CD8-positive, alpha-beta T cell (primary cell): ENCODE measurements at regions of chr16 and their contacts with region 1.

Region 1: GRCh38 chr16:2715519-2715918 is 4.5 kb downstream of the PRSS27 start:
- DNase-seq: peak; percentile 70 to 90 (median 87)
- ATAC-seq: peak; percentile 99
- H3K4me3 ChIP-seq: peak overlapping the region; percentile 8 to 33
- H3K4me3 Mint-ChIP-seq: peak overlapping the region; percentile 5
- H3K27ac ChIP-seq: no peak overlapping the region
- H3K27ac Mint-ChIP-seq: no peak overlapping the region
- H3K4me1 ChIP-seq: peaks cover 5% of the 10 kb centered on the region
- H3K4me1 Mint-ChIP-seq: peaks cover 3% of the 10 kb centered on the region
- H3K27me3 ChIP-seq: no peaks in the 10 kb centered on the region
- H3K27me3 Mint-ChIP-seq: no peaks in the 10 kb centered on the region
- CTCF ChIP-seq: no peak

Region 2: DNA sequence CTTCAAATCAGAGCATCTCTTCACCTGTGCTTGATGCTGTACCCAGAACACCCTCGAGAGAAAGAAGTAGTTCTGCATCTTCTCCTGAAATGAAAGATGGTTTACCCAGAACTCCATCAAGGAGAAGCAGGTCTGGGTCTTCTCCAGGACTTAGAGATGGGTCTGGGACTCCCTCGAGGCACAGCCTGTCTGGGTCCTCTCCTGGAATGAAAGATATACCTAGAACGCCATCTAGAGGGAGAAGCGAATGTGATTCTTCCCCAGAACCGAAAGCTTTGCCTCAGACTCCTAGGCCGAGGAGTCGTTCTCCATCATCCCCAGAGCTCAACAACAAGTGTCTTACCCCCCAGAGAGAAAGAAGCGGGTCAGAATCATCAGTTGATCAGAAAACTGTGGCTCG is 49.2 kb after region 1 on chr16:
- CTCF ChIA-PET with region 1: no interaction called
- POLR2A ChIA-PET with region 1: no interaction called
- intact Hi-C with region 1: no loop called
- DNase-seq: no peak
- ATAC-seq: no peak
- H3K4me3 ChIP-seq: no peak overlapping the region
- H3K4me3 Mint-ChIP-seq: no peak overlapping the region
- H3K27ac ChIP-seq: no peak overlapping the region
- H3K27ac Mint-ChIP-seq: no peak overlapping the region
- H3K4me1 ChIP-seq: no peaks in the 10 kb centered on the region
- H3K4me1 Mint-ChIP-seq: peaks cover 17% of the 10 kb centered on the region
- H3K27me3 ChIP-seq: no peaks in the 10 kb centered on the region
- H3K27me3 Mint-ChIP-seq: no peaks in the 10 kb centered on the region
- CTCF ChIP-seq: no peak

Region 3: DNA sequence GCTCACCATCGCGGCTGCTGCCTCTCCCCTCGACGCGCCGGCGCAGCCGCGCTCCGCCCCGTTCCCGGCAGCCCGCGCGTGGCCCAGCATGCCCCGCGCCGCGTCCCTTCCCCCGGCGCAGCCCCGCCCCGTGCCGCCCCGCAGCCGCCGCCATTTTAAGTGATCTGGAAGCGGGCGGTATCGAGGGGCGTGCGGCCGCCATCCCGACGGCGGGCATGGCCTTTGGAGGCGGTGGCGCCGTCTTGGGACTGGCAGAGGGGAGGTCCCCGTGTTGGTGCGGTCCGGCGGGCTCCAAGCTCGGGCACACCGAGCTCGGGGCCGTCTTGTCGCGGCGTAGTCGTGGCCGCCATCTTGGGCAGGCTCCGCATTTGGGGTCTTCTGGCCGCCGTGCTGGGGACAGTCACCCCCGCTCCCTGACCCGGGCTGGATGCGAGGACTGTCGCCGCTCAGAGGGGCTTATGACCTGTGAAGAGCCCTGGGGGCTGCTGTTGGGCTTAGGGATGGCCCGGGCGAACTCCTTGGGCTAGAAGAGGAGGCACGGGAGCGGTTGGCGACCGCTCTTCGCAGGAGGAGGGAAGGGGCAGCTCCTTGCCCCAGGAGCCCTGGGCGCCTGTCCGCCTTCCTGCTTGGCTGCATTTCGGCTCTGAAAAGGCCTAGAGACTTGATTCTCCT is 61.8 kb after region 1 on chr16 and contains the start of gene ELOB:
- CTCF ChIA-PET with region 1: no interaction called
- POLR2A ChIA-PET with region 1: no interaction called
- intact Hi-C with region 1: loop called in 1 of 2 experiments (anchors 2 kb)
- DNase-seq: peak; percentile 78 to 94 (median 88)
- ATAC-seq: peak; percentile 90
- H3K4me3 ChIP-seq: peak within 1 kb of the TSS; percentile 84 to 92
- H3K4me3 Mint-ChIP-seq: peak within 1 kb of the TSS; percentile 95
- H3K27ac ChIP-seq: peak within 1 kb of the TSS; percentile 96 to 99
- H3K27ac Mint-ChIP-seq: peak within 1 kb of the TSS; percentile 98
- H3K4me1 ChIP-seq: peaks cover 30% of the 10 kb centered on the region
- H3K4me1 Mint-ChIP-seq: peaks cover 50% of the 10 kb centered on the region
- H3K27me3 ChIP-seq: no peaks in the 10 kb centered on the region
- H3K27me3 Mint-ChIP-seq: no peaks in the 10 kb centered on the region
- CTCF ChIP-seq: no peak
- total RNA-seq, gene ELOB: 70.3 to 71.5 TPM